ENCODE measurements at regions of chr1 and their contacts with region 1.

Region 1: DNA sequence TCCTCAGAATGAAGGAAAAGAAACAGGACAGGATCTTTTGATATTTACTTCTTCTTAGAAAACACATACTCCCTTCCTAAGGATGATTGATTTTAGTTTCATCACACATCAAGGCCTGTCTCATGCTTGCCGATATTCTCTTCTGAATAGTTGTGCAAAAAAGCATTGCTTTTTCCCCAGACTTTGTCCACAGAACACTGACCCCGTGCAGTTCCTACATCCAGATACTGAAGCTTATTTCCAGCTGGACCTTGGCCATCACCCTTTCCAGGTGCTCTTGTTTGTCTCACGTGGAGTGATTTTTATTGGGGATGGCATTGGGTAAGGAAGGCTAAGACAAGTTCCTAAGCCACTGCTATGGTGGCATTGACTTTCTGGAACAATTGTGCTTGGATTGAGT is 197.3 kb upstream of the HOOK1 start:
- DNase-seq: no peak

Region 2: DNA sequence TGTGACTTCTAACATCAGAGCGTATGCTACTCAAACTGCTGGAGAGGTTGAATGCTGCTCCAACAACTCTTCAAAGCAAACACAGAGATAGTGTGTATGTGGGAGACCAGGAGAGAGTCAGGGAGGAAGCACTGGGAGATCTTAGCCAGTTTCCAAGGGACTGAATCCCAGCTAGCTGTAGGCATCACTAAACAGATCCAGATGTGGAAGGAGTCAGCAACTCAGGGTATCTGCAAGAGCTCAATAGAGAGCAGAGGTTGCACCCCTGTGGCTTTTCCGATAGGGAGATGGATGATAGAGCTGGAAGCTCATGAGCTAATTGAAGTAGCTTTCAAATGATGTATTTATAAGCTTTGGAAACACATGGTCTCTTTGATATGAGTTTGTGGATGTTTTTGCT is 28.5 kb after region 1 on chr1:
- intact Hi-C with region 1: loop called in 1 of 2 experiments (anchors 2 kb)
- DNase-seq: no peak

Region 3: GRCh38 chr1:59750328-59751003 is 133.0 kb after region 1 on chr1:
- intact Hi-C with region 1: no loop called
- DNase-seq: no peak